Uterus (tissue), 4 donors: ENCODE measurements at regions of chr2 and their contacts with region 1.

Region 1: GRCh38 chr2:216687646-216688045 is 7.7 kb downstream of the IGFBP5 start:
- DNase-seq: peak in 1 of 2 donors; percentile 20
- H3K4me3 ChIP-seq: no peak overlapping the region
- H3K27ac ChIP-seq: peak overlapping the region; percentile 93 to 95
- H3K4me1 ChIP-seq: peaks cover 15 to 38% of the 10 kb centered on the region in 2 donors
- H3K27me3 ChIP-seq: no peaks in the 10 kb centered on the region
- CTCF ChIP-seq: peak in 2 of 4 experiments; percentile 20 to 32
- POLR2A ChIP-seq: no peak

Region 2: GRCh38 chr2:216498418-216499413 is 188.9 kb before region 1 on chr2 and contains the start of gene RPL37A:
- intact Hi-C with region 1: no loop called
- DNase-seq: peak; percentile 91 to 92
- H3K4me3 ChIP-seq: peak within 1 kb of the TSS; percentile 74 to 93
- H3K27ac ChIP-seq: peak within 1 kb of the TSS; percentile 82 to 87
- H3K4me1 ChIP-seq: peaks cover 0 to 17% of the 10 kb centered on the region in 2 donors
- H3K27me3 ChIP-seq: no peaks in the 10 kb centered on the region
- CTCF ChIP-seq: peak in 1 of 4 experiments; percentile 18
- POLR2A ChIP-seq: peak; percentile 77 to 91
- total RNA-seq, gene RPL37A: 716 to 2,917 (median 2,308) TPM

Region 3: GRCh38 chr2:216740557-216741222 is 53.0 kb after region 1 on chr2:
- intact Hi-C with region 1: no loop called
- DNase-seq: peak in 1 of 2 donors; percentile 42
- H3K4me3 ChIP-seq: no peak overlapping the region
- H3K27ac ChIP-seq: peak overlapping the region; percentile 42 to 68
- H3K4me1 ChIP-seq: no peaks in the 10 kb centered on the region
- H3K27me3 ChIP-seq: no peaks in the 10 kb centered on the region
- CTCF ChIP-seq: no peak
- POLR2A ChIP-seq: no peak

Region 4: DNA sequence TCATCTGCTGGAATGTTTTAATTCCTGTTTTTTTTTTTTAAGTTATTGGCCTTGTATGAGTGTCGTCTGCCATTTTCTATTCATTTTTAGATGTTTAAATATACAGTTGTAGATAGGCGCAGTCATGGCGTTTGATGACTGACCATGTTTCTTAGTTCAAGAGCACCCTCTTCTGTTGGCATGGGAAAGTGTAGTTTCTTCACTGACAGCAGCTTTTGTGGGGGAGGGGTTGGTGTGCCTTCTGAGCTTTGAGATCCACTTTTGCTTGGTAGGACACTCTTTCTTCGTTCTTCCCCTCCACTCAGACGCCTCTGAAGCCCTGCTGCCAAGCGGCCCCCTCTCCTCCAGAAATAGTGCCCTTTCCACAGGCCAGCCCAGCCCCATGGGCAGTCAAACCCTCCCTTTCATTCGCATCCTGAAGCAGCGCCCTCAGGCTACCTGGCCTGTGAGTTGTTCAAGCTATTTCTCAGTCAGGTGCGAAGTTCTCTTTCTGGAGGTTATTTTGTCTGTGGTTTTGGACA is 823.2 kb after region 1 on chr2:
- intact Hi-C with region 1: loop called (anchors 10 kb)
- DNase-seq: peak; percentile 66 to 78
- H3K4me3 ChIP-seq: no peak overlapping the region
- H3K27ac ChIP-seq: peak overlapping the region; percentile 25 to 64
- H3K4me1 ChIP-seq: no peaks in the 10 kb centered on the region
- H3K27me3 ChIP-seq: no peaks in the 10 kb centered on the region
- CTCF ChIP-seq: peak; percentile 70 to 90 (median 79)
- POLR2A ChIP-seq: no peak

Region 5: GRCh38 chr2:217713395-217714286 is 1026.0 kb after region 1 on chr2:
- intact Hi-C with region 1: loop called (anchors 10 kb)
- DNase-seq: peak; percentile 81 to 87
- H3K4me3 ChIP-seq: no peak overlapping the region
- H3K27ac ChIP-seq: peak overlapping the region; percentile 22 to 72
- H3K4me1 ChIP-seq: peaks cover 0 to 5% of the 10 kb centered on the region in 2 donors
- H3K27me3 ChIP-seq: no peaks in the 10 kb centered on the region
- CTCF ChIP-seq: peak; percentile 92 to 98 (median 96)
- POLR2A ChIP-seq: no peak